ENCODE measurements at regions of chr21 and their contacts with region 1.

Region 1: GRCh38 chr21:25639551-25640201 is 618 bp downstream of the JAM2 start:
- DNase-seq: peak; percentile 53 to 76 (median 60)
- ATAC-seq: peak; percentile 47 to 88 (median 80)
- H3K4me3 ChIP-seq: peak overlapping the region; percentile 67 to 94 (median 78)
- H3K27ac ChIP-seq: peak overlapping the region; percentile 77 to 93 (median 86)
- H3K4me1 ChIP-seq: peaks cover 0 to 24% (median 18%) of the 10 kb centered on the region in 12 donors
- H3K27me3 ChIP-seq: no peaks in the 10 kb centered on the region
- CTCF ChIP-seq: peak in 11 of 12 donors; percentile 12 to 62 (median 47)
- POLR2A ChIP-seq: no peak

Region 2: DNA sequence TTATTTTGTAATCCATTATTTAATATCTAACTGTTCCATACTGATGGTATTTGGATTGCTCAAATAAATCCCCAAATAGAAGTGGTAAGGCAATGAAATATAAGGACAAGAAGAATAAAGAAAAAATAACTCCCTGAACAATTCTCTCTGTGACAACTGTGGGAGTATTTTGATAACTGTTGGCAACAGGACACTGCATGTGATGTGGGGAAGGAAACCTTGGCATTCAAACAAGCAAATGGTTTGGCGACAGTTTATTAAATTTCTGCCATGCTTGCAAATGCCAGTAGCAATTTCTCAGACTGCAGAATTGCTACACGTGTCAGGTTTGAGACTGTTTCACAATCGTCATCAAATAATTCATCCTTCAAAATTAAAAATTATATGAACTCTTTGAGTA is 23.8 kb before region 1 on chr21:
- intact Hi-C with region 1: loop called in 1 of 10 experiments (anchors 1 kb)
- DNase-seq: no peak
- ATAC-seq: peak in 2 of 4 donors; percentile 66 to 75
- H3K4me3 ChIP-seq: no peak overlapping the region
- H3K27ac ChIP-seq: peak overlapping the region in 6 of 12 donors; percentile 1 to 51 (median 28)
- H3K4me1 ChIP-seq: peaks cover 0 to 6% (median 0%) of the 10 kb centered on the region in 12 donors
- H3K27me3 ChIP-seq: no peaks in the 10 kb centered on the region
- CTCF ChIP-seq: no peak
- POLR2A ChIP-seq: no peak

Region 3: GRCh38 chr21:25688275-25689155 is 48.8 kb after region 1 on chr21:
- intact Hi-C with region 1: loop called in 2 of 10 experiments (anchors 5 to 10 kb)
- DNase-seq: no peak
- ATAC-seq: peak in 3 of 4 donors; percentile 59 to 85 (median 68)
- H3K4me3 ChIP-seq: no peak overlapping the region
- H3K27ac ChIP-seq: peak overlapping the region in 10 of 12 donors; percentile 35 to 79 (median 64)
- H3K4me1 ChIP-seq: peaks cover 0 to 42% (median 8%) of the 10 kb centered on the region in 12 donors
- H3K27me3 ChIP-seq: no peaks in the 10 kb centered on the region
- CTCF ChIP-seq: no peak
- POLR2A ChIP-seq: no peak

Region 4: DNA sequence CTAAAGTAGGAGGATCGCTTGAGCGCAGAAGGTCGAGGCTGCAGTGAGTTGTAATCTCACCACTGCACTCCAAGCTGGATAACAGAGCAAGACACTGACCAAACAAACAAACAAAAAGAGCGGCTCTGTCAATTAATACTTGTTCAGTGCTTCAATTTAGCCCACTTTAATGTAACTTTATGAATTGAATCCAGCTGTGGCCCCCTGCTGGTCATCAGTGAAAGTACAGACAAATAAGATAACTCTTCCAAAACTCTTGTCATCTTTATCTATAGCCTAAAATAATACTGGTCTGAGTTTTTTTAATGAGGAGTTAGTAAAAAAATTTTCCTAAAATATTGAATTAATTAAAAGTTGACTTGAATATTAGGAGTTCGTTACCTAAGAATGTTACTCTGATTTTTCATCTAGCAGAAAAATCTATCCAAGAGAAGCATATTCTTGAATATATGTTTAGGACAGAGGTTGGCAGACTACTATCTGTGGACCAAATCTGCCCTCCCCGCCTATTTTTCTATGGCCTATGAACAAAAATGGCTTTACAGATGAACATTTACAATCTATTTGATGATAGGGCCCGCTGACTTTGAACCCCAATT is 68.9 kb after region 1 on chr21:
- intact Hi-C with region 1: loop called in 4 of 10 experiments (anchors 1 to 10 kb)
- DNase-seq: peak in 2 of 5 donors; percentile 37 to 39
- ATAC-seq: no peak
- H3K4me3 ChIP-seq: no peak overlapping the region
- H3K27ac ChIP-seq: peak overlapping the region in 1 of 12 donors; percentile 4
- H3K4me1 ChIP-seq: peaks cover 0 to 14% (median 3%) of the 10 kb centered on the region in 12 donors
- H3K27me3 ChIP-seq: no peaks in the 10 kb centered on the region
- CTCF ChIP-seq: peak; percentile 72 to 94 (median 88)
- POLR2A ChIP-seq: no peak

Measured in heart left ventricle (tissue), 16 donors.